ENCODE measurements at regions of chr6 and their contacts with region 1.

Region 1: GRCh38 chr6:1424306-1424928 is 35.0 kb downstream of the FOXF2 start:
- DNase-seq: peak; percentile 57
- CTCF ChIP-seq: peak; percentile 67

Region 2: DNA sequence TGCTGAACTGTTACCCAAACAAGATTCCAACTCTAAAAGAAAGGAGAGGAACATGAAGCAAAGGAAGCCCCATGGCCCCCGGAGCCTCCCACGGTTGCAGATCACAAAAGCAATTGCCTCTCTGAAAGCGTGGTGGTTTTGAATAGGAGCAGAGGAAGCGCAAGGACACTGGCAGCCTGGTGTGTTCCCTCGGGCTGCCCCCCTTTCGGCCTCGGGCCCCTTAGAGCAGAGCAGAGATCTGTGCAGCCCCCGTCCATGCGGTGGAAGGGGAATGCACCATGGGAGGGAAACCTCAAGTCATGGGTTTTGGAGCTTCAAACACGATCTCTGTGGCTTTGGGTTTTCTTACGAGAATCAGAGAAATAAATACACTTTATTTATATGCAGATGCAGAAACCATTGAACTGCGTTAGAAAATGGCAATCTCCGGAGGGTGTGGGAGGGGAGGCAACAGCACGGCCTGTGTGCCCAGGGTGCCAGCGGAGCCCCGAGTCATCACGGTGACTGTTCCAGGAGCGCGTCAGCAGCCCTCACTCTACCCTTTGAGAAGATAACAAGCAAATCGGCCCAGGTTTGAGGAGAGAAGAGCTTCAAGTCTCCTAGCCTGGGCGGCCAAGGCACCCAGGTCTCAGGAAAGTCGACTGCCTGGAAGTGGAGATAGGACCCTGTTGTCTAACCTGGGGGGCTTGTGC is 14.5 kb before region 1 on chr6:
- CTCF ChIA-PET with region 1: interaction called, 23 read pairs
- POLR2A ChIA-PET with region 1: no interaction called
- DNase-seq: no peak
- CTCF ChIP-seq: no peak

Region 3: DNA sequence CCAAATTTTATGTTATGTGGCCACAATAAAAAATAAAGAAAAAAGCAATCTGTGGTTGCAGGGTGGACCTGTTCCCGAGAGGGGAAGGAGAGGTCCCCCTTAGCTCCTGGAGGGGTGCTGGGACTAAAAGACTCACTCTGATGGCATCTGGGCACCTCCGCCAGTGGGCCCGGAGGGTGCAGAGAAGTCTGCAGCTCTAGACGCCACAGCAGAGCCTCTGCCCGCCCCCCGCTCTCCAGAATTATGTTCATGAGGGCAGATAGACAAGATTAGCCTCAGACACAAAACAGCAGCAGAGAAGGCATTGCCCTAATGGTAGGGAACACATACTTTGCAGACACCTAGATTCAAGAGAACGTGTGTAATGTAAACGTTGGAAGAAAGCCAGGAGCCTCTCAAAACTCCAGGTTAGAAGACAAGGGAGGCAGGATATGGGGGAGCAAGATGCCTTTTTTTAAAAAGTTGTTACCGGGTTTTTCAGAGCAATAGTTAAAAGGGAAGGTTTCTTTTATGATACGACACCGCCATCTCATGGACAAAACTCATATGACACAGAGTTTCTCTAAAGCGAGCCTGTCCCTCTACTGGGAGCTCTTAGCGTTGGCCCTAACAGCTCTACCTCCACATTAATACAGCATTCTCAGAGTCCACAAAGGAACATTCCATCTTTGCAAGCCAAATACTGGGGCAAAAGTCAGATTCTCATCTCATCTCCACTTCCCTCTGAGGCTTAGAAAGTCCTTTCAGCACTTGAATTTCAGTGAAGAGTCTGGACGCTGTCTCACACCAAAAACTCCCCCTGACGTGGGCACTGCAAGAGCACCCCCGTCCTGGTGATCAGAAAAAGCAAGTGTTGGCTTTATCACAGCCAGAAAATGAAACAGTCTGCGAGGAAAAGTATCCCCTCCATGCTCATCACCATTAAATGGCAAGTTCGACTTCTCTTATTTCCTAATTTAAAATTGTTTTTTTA is 12.2 kb after region 1 on chr6:
- CTCF ChIA-PET with region 1: interaction called, 18 read pairs
- POLR2A ChIA-PET with region 1: no interaction called
- DNase-seq: peak; percentile 83
- CTCF ChIP-seq: peak; percentile 57

Region 4: DNA sequence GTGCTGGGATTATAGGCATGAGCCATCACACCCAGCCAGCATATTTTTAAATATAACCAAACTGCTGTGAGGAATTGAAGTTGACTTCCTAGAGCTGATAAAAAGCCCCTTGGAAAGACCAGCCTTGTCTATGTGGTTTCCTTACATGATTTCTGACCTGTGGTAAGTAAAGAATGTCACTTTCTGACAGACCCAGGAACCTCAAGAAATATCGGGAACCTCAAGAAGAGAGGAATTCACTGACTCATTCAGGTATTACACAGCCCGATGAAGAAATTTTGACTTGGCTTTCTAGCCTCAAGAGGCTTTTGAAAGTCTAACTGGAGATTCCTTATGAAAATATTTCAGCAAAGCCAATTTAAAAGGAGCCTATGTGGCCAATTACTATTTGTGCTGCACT is 36.8 kb after region 1 on chr6:
- CTCF ChIA-PET with region 1: no interaction called
- POLR2A ChIA-PET with region 1: no interaction called
- DNase-seq: no peak
- CTCF ChIP-seq: no peak

Region 5: DNA sequence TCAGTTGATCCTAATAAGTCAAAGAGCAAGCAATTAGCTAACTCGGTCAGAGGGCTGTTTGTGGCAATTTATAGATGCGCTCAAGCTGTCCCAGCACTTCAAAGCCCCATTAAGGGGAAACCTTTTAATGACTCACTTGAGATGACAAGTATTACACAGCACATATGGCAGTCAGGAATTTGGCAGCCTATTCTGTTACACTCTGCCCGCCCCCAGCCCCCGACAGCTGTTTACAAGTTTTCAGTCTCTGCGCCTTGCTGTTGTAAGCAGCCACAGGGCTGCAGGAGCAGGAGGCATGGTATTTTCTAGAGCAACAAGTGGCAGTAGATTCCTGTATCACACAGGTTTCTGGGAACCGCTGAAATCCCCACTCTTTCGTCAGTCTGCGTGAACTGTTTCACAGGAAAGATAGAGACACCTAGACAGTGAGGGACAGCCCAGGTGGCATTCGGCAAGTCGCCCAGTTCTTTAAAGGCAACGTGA is 448.3 kb after region 1 on chr6:
- CTCF ChIA-PET with region 1: no interaction called
- POLR2A ChIA-PET with region 1: no interaction called
- DNase-seq: no peak
- CTCF ChIP-seq: no peak